GM12878 (cell line): ENCODE measurements at regions of chr14 and their contacts with region 1.

Region 1: GRCh38 chr14:63852817-63853731 is at the start of gene SYNE2:
- DNase-seq: no peak
- ATAC-seq: peak; percentile 94
- H3K4me3 ChIP-seq: peak within 1 kb of the TSS; percentile 94
- H3K27ac ChIP-seq: peak within 1 kb of the TSS; percentile 45
- H3K4me1 ChIP-seq: peaks cover 6% of the 10 kb centered on the region; the same call in 1 of the 2 replicates
- H3K27me3 ChIP-seq: no peaks in the 10 kb centered on the region
- CTCF ChIP-seq: peak; percentile 23 to 41 (median 23); a peak in 4 of 6 replicates
- EP300 ChIP-seq: no peak
- POLR2A ChIP-seq: peak; percentile 74
- RAD21 ChIP-seq: peak; percentile 42; the same call in 1 of the 2 replicates
- polyA plus RNA-seq, gene SYNE2: 2.1 to 4.6 TPM

Region 2: DNA sequence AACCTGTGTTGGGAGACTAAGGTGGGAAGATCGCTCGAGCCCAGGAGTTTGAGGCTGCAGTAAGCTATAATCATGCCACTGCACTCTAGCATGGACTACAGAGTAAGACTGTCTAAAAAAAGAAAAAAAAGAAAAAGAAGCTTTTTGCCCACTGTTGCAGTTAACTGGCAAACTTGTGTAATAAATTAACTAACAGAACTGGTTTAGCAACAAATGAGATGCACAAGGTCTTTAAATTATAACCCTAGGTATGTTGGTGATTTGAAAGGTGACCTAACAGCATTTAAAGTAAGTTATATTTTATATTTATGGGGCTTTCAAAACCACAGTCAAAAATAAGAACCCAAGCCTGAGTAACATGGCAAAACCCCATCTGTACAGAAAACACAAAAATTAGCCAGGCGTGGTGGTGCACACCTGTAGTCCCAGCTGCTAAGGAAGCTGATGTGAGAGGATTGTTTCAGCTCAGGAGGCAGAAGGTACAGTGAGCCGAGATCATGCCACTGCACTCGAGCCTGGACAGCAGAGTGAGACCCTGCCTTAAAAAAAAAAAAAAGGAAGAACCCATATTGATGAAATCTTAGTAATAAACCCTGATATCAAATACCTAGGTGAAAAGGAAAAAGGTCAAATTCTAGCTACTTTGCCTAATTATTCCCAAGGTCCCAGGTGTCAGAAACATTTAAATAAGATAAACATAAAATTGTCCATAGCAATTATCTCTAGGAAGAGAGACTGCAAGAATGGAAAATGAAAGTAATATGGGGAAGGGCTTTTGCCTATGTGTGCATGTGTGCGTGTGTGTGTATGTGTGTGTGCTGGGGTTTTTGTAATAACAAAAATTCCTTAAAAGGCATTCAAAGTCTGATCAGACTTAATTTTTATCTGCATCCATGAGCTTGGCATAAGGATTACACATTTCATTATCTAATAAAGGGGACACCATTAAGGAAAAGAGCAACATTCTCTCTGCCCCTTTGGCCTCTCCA is 15.2 kb after region 1 on chr14:
- CTCF ChIA-PET with region 1: interaction called, 14 read pairs
- POLR2A ChIA-PET with region 1: interaction called, 10 read pairs
- RAD21 ChIA-PET with region 1: interaction called, 7 read pairs
- SMC1A ChIA-PET with region 1: interaction called, 39 read pairs
- in situ Hi-C with region 1: no loop called
- intact Hi-C with region 1: loop called (anchors 1 kb)
- DNase-seq: peak; percentile 56
- ATAC-seq: peak; percentile 5
- H3K4me3 ChIP-seq: peak overlapping the region; percentile 34; the same call in 1 of the 2 replicates
- H3K27ac ChIP-seq: peak overlapping the region; percentile 69
- H3K4me1 ChIP-seq: peaks cover 57% of the 10 kb centered on the region
- H3K27me3 ChIP-seq: no peaks in the 10 kb centered on the region
- CTCF ChIP-seq: no peak
- EP300 ChIP-seq: no peak
- POLR2A ChIP-seq: no peak
- RAD21 ChIP-seq: no peak

Region 3: GRCh38 chr14:63910583-63911363 is 57.7 kb after region 1 on chr14:
- CTCF ChIA-PET with region 1: no interaction called
- POLR2A ChIA-PET with region 1: no interaction called
- RAD21 ChIA-PET with region 1: no interaction called
- SMC1A ChIA-PET with region 1: interaction called, 10 read pairs
- in situ Hi-C with region 1: no loop called
- intact Hi-C with region 1: no loop called
- DNase-seq: no peak
- ATAC-seq: peak; percentile 53
- H3K4me3 ChIP-seq: no peak overlapping the region
- H3K27ac ChIP-seq: peak overlapping the region; percentile 56
- H3K4me1 ChIP-seq: peaks cover 17% of the 10 kb centered on the region
- H3K27me3 ChIP-seq: no peaks in the 10 kb centered on the region
- CTCF ChIP-seq: no peak
- EP300 ChIP-seq: no peak
- POLR2A ChIP-seq: no peak
- RAD21 ChIP-seq: no peak

Region 4: DNA sequence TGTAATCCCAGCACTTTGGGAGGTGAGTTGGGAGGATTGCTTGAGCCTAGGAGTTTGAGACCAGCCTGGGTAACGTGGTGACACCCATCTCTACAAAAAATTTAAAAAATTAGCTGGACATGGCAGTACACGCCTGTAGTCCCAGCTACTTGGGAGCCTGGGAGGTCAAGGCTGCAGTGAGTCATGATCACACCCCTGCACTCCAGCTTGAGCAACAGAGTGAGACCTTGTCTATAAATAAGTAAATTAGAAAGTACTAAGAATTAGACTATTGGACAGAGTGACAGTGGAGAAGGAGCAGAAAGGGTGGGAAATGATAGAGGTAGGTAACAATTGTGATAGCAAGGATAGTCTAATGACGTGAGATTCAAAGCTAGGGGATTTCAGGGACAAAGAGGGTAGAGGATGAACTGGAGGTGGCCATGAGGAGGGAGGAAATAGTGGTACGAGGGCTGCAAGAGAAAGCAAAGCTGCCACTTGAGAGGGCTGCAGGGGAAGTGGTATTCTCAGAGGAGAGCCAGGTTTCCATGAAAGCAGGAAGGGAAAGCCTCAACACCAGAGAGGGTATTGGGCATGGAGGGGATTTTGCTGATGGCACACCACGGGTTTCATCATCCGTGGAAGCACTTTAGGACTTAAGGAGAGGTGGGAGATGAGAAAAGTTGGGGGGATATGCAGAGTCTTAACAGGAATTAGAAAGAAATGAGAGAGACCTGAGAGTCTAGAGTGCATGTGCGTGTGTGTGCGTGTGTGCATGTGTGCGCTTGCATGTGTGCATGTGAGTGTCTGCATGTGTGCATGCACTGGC is 85.3 kb after region 1 on chr14:
- CTCF ChIA-PET with region 1: interaction called, 4 read pairs
- POLR2A ChIA-PET with region 1: no interaction called
- RAD21 ChIA-PET with region 1: interaction called, 4 read pairs
- SMC1A ChIA-PET with region 1: interaction called, 3 read pairs
- in situ Hi-C with region 1: no loop called
- intact Hi-C with region 1: loop called (anchors 5 kb)
- DNase-seq: peak; percentile 56
- ATAC-seq: peak; percentile 84
- H3K4me3 ChIP-seq: no peak overlapping the region
- H3K27ac ChIP-seq: peak overlapping the region; percentile 76
- H3K4me1 ChIP-seq: peaks cover 42% of the 10 kb centered on the region
- H3K27me3 ChIP-seq: no peaks in the 10 kb centered on the region
- CTCF ChIP-seq: no peak
- EP300 ChIP-seq: no peak
- POLR2A ChIP-seq: no peak
- RAD21 ChIP-seq: no peak

Region 5: GRCh38 chr14:63993992-63994391 is 140.9 kb after region 1 on chr14:
- CTCF ChIA-PET with region 1: interaction called, 3 read pairs
- POLR2A ChIA-PET with region 1: interaction called, 5 read pairs
- RAD21 ChIA-PET with region 1: no interaction called
- SMC1A ChIA-PET with region 1: interaction called, 4 read pairs
- in situ Hi-C with region 1: no loop called
- intact Hi-C with region 1: loop called (anchors 5 kb)
- DNase-seq: no peak
- ATAC-seq: no peak
- H3K4me3 ChIP-seq: no peak overlapping the region
- H3K27ac ChIP-seq: no peak overlapping the region
- H3K4me1 ChIP-seq: no peaks in the 10 kb centered on the region; the same call in 1 of the 2 replicates
- H3K27me3 ChIP-seq: no peaks in the 10 kb centered on the region
- CTCF ChIP-seq: peak in 2 of 3 experiments; percentile 13 to 37; a peak in 1 of 6 replicates
- EP300 ChIP-seq: no peak
- POLR2A ChIP-seq: no peak
- RAD21 ChIP-seq: peak; percentile 45; the same call in 1 of the 2 replicates